ENCODE measurements at regions of chr1 and their contacts with region 1.

Region 1: DNA sequence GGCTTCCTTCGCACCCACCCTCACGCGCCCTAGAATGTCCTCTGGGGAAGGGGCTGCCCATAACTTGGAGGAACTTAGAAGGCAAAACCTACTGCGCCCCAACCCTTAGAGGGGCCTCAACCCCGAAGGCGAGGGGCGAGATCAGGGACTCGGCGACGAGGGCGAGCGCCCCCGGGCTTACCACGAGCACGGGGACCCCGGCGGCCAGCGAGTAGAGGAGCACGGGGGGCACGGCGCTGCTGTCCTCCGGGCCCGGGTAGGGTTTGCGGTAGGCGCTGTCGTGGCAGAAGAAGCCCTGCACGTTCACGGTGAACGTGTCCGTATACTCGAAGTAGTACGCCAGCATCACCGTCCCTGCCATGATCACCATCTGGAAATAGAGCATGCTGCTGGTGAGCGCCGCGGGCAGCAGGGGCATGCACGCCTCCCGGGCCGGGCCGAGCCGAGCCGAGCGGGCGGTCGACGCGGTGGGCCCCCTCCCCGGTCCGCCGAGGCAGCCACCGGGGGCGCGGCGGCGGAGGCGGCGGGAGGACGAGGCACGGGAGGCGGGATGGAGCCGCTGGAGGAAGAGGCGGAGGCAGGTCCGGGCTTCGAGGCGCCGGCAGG is 304 bp downstream of the PLPPR5 start:
- DNase-seq: no peak
- H3K4me3 ChIP-seq: peak overlapping the region; percentile 37
- H3K27me3 ChIP-seq: peaks cover 20% of the 10 kb centered on the region
- CTCF ChIP-seq: no peak

Region 2: GRCh38 chr1:99018313-99018712 is 14.0 kb after region 1 on chr1:
- CTCF ChIA-PET with region 1: no interaction called
- POLR2A ChIA-PET with region 1: interaction called, 14 read pairs
- DNase-seq: no peak
- H3K4me3 ChIP-seq: no peak overlapping the region
- H3K27me3 ChIP-seq: no peaks in the 10 kb centered on the region
- CTCF ChIP-seq: no peak

Measured in BJ (cell line).